Activated T-helper 2 cell treated with anti-CD3 and anti-CD28 coated beads, Interferon-gamma antibody, Interleukin-2, Interleukin-4, amounts not matched to agents 10 μg/mL and 5 μg/mL and 100 μg/mL, durations not matched to agents 14 hours and 24 hours and 36 hours (primary cell): ENCODE measurements at regions of chr7 and their contacts with region 1.

Region 1: GRCh38 chr7:152436111-152436930 is 518 bp upstream of the KMT2C start:
- DNase-seq: peak; percentile 84
- H3K4me3 Mint-ChIP-seq: peak overlapping the region; percentile 69
- H3K27ac Mint-ChIP-seq: peak overlapping the region; percentile 68
- H3K4me1 Mint-ChIP-seq: peaks cover 16% of the 10 kb centered on the region
- H3K27me3 Mint-ChIP-seq: no peaks in the 10 kb centered on the region

Region 2: DNA sequence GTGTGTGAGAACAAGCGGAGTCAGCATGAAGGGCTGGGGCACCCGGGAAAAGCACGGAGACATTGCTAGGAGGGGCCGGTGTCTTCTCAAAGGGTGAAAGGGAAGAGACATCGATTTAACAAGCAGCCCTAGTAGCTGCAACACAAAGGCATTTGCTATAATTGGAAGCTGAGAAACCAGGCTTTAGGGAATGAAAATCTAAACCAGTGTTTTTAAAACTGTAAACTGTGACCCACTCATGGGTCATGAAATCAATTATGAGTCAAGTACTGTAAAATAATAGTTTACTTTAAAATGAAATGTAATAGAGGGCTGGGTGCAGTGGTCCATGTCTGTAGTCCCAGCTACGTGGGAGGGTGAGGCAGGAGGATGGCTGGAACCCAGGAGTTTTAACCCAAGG is 787.9 kb before region 1 on chr7:
- intact Hi-C with region 1: no loop called
- DNase-seq: no peak
- H3K4me3 Mint-ChIP-seq: no peak overlapping the region
- H3K27ac Mint-ChIP-seq: no peak overlapping the region
- H3K4me1 Mint-ChIP-seq: no peaks in the 10 kb centered on the region
- H3K27me3 Mint-ChIP-seq: peaks cover 3% of the 10 kb centered on the region

Region 3: DNA sequence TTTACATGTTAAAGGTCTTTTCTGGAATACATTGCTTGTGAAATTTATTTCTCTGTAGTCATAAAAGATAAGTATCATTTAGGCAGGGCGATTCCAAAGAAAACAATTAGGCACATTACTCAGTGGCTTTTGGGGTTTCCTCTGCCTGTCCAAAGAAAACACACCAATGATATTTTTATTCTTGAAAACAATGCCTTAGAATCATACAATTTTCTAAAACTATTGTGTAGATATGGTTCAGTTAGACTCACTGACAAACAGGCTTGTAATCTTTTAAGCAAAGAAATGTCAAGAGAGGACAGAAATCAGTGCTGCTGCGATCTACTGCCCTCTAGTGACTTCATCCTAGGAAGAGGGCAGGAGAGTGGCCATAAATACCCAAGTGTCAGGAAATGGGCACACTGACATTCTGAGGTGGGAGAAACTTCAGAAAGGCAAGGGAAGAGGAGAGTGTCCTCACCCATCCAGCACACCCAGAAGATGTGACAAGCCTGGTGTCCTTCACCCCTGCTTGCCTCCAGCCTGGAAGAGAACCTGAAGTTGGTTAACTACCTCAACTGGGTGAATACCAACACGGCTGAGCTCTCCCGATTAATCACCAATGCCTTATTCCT is 290.4 kb before region 1 on chr7:
- intact Hi-C with region 1: loop called (anchors 10 kb)
- DNase-seq: no peak
- H3K4me3 Mint-ChIP-seq: peak overlapping the region; percentile 17
- H3K27ac Mint-ChIP-seq: peak overlapping the region; percentile 89
- H3K4me1 Mint-ChIP-seq: peaks cover 43% of the 10 kb centered on the region
- H3K27me3 Mint-ChIP-seq: no peaks in the 10 kb centered on the region

Region 4: DNA sequence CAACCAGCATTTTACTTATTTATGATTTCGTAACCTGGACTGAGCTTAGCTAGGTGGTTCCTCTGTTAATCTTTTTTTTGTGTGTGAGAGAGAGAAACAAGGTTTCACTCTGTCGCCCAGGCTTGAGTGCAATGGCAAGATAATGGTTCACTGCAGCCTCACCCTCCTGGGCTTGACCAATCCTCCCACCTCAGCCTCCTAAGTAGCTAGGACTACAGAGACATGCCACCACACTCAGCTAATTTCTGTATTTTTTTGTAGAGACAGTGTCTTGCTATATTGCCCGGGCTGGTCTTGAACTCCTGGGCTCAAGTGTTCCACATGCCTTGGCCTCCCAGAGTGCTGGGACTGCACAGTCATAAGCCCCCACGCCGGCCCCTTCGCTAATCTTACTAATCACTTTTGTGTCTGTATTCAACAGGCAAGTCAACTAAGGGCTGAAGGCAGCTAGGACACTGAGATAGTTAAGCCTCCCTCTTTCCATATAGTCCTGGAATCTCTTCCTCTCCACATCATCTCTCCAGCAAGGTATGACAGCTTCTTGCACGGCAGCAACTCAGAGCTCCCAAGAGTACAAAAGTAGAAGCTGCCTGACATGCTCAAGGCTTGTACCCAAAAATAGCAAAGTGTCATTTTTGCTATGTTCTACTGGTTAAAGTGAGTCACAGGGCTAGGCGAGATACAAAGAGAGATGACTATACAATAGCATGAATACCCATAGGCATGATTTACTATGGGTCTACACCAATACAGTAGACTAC is 11.8 kb before region 1 on chr7:
- intact Hi-C with region 1: no loop called
- DNase-seq: no peak
- H3K4me3 Mint-ChIP-seq: no peak overlapping the region
- H3K27ac Mint-ChIP-seq: peak overlapping the region; percentile 78
- H3K4me1 Mint-ChIP-seq: peaks cover 35% of the 10 kb centered on the region
- H3K27me3 Mint-ChIP-seq: no peaks in the 10 kb centered on the region

Region 5: DNA sequence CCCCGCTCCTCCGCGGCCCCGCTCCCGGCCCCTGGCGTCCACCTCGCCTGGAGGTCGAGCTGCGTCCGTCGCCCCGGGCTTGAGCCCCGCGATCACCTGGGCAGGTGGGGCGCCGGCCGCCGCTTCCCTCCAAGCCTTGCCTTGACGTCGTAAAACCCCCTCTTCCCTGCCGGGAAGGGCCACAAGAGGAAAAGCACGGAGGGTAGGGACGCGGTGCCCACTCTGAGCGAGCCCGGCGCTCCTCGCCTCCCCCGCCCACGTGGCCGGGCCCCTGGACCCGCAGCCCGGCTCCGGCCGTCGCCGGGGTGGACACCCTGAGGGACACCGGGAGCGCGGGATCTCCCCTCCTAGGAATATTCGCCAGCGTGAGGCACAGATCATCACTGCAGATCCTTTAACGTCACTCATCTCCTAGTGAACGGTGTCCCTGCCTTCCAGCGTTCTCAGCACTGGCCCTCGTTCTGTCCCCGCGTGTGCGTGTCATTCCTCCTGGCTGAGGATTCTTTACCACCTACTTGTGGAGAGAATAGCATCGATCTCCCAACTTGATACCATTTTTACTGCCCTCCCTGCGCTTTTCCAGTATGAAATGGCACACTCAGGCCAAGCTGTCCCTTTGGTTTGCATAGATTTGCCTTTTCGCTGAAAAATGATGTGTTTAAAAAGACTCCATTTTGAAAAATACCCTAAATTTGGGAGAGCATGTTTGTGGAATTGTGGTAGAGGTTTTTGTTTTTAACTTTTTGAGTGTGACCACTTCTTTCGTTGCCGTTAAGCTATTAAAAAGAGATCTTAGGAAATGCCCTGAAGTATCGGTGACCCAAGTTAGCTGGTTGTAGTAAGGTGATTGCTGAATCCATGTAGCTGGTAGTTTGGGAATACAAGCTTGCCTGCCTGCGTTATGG is 323.9 kb after region 1 on chr7:
- intact Hi-C with region 1: loop called (anchors 2 kb)
- DNase-seq: peak; percentile 9
- H3K4me3 Mint-ChIP-seq: peak overlapping the region; percentile 91
- H3K27ac Mint-ChIP-seq: peak overlapping the region; percentile 84
- H3K4me1 Mint-ChIP-seq: peaks cover 18% of the 10 kb centered on the region
- H3K27me3 Mint-ChIP-seq: no peaks in the 10 kb centered on the region